Activated CD4-positive, alpha-beta T cell treated with anti-CD3 and anti-CD28 coated beads, Interleukin-2, amount 10 ng/mL, durations not matched to agents 7 days and 5 days (primary cell): ENCODE measurements at regions of chr15 and their contacts with region 1.

Region 1: DNA sequence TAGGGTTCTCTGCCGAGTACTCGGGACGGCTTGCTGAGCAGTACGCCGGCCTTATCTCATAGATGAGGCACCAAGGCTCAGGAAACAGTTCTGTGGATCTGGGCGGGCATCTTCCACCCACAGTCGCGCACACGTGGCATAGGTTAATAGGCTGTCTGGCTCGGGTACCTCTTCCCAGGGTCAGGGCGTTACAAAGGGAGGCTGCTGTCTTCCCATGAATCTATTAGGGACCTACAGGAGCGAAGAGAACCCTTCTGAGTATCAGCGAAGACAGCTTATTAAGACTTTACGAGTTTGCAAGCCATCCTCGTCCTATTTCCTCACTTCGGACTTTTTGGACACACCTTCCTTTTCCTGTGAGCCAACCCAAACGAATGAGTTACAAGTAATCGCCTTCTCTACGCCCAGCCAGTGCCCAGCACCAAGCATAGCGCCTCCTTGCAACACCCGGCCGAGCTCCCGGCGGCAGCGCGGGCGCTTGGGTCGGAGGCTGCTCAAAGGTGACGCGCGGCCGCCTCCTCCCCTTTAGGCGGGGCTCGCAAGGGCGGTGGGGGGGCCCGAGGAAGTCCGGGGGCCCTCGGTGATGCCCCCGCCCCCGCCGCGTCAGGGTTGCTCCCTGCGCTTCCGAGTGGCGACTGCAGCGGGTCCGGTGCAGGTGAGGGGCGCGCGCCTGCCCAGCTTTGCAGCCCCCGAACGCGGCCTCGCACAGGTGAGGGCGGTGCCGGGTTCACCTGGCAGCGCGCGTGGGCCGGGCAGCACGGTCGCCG is at the start of gene MCTP2:
- DNase-seq: peak; percentile 84
- H3K4me3 Mint-ChIP-seq: peak within 1 kb of the TSS; percentile 90
- H3K27ac Mint-ChIP-seq: peak within 1 kb of the TSS; percentile 97
- H3K4me1 Mint-ChIP-seq: peaks cover 65% of the 10 kb centered on the region
- H3K27me3 Mint-ChIP-seq: peaks cover 2% of the 10 kb centered on the region
- total RNA-seq, gene MCTP2: 17.0 to 17.2 TPM

Region 2: DNA sequence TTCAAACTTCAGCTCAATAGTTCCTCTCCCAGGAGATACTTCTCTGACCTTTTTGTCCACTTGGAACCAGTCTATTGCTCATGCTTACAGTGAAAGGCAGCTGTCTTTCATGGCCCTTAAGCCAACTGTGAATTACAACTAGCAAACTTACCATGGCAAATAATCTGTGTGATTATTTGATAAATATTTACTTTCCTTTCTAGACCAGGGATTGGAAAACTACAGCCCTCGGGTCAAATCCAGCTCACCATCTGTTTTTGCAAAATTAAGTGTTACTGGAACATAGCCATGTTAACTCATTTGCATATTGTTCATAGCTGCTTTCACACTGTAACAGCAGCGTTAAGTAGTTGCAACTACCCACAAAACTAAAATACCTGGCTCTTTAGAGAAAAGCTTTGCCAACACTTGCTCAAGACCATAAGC is 288.9 kb before region 1 on chr15:
- CTCF ChIA-PET with region 1: no interaction called
- POLR2A ChIA-PET with region 1: no interaction called
- DNase-seq: no peak
- H3K4me3 Mint-ChIP-seq: no peak overlapping the region
- H3K27ac Mint-ChIP-seq: no peak overlapping the region
- H3K4me1 Mint-ChIP-seq: no peaks in the 10 kb centered on the region
- H3K27me3 Mint-ChIP-seq: peaks cover 3% of the 10 kb centered on the region

Region 3: GRCh38 chr15:94174399-94174802 is 56.7 kb before region 1 on chr15:
- CTCF ChIA-PET with region 1: no interaction called
- POLR2A ChIA-PET with region 1: interaction called, 10 read pairs
- DNase-seq: no peak
- H3K4me3 Mint-ChIP-seq: no peak overlapping the region
- H3K27ac Mint-ChIP-seq: no peak overlapping the region
- H3K4me1 Mint-ChIP-seq: peaks cover 23% of the 10 kb centered on the region
- H3K27me3 Mint-ChIP-seq: peaks cover 10% of the 10 kb centered on the region

Region 4: GRCh38 chr15:94294556-94294955 is 63.4 kb after region 1 on chr15:
- CTCF ChIA-PET with region 1: no interaction called
- POLR2A ChIA-PET with region 1: no interaction called
- DNase-seq: no peak
- H3K4me3 Mint-ChIP-seq: no peak overlapping the region
- H3K27ac Mint-ChIP-seq: no peak overlapping the region
- H3K4me1 Mint-ChIP-seq: peaks cover 57% of the 10 kb centered on the region
- H3K27me3 Mint-ChIP-seq: no peaks in the 10 kb centered on the region

Region 5: GRCh38 chr15:94306700-94307650 is 75.8 kb after region 1 on chr15:
- CTCF ChIA-PET with region 1: interaction called, 10 read pairs
- POLR2A ChIA-PET with region 1: interaction called, 4 read pairs
- DNase-seq: no peak
- H3K4me3 Mint-ChIP-seq: no peak overlapping the region
- H3K27ac Mint-ChIP-seq: peak overlapping the region; percentile 38
- H3K4me1 Mint-ChIP-seq: peaks cover 46% of the 10 kb centered on the region
- H3K27me3 Mint-ChIP-seq: no peaks in the 10 kb centered on the region